ENCODE measurements at regions of chr6 and their contacts with region 1.

Region 1: GRCh38 chr6:53294095-53294494 is 54.7 kb downstream of the ELOVL5 start:
- DNase-seq: peak in 1 of 2 experiments; percentile 64
- H3K4me3 ChIP-seq: no peak overlapping the region
- H3K27ac ChIP-seq: no peak overlapping the region
- H3K4me1 ChIP-seq: no peaks in the 10 kb centered on the region
- H3K27me3 ChIP-seq: no peaks in the 10 kb centered on the region
- CTCF ChIP-seq: peak; percentile 71 to 85 (median 82)
- EP300 ChIP-seq: no peak
- POLR2A ChIP-seq: no peak
- RAD21 ChIP-seq: peak; percentile 69 to 76

Region 2: DNA sequence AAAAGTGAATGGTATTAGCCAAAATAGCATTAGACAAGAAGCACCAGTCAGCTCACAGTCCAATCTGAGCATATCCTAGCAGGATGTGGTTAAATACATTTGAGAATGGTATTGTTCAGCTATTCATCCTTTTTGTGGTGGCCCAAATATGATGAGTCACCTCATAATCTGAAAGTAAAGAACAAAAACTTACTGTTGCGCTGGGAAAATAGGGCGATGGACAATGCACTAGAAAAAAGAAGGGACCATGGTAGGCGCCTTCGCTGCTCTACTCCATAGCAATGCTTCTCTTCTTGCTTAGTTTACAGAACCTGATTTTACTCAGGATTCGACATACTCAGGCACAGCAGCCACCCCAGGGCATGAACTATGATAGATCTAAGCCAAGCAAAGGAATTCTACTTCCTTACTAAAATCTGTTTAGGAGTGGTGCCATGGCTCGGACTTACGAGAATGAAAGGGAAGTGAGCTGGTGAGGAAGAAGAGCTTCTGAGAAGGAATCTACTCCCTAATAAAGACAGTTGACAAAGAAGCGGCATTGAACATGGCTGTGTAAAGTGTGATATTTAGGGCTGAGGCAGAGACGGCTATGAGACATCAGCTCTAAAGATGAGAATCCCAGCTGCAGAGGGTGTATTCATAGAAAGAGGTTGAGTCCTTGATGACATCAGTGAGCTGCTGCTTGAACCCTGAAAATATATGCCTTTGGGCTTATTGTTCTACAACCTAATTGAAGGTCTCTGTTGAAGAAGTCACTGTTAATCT is 245.5 kb before region 1 on chr6:
- CTCF ChIA-PET with region 1: no interaction called
- POLR2A ChIA-PET with region 1: no interaction called
- DNase-seq: no peak
- H3K4me3 ChIP-seq: no peak overlapping the region
- H3K27ac ChIP-seq: no peak overlapping the region
- H3K4me1 ChIP-seq: peaks cover 0 to 9% (median 5%) of the 10 kb centered on the region in 4 experiments; a peak in 3 of 7 replicates
- H3K27me3 ChIP-seq: no peaks in the 10 kb centered on the region
- CTCF ChIP-seq: no peak
- EP300 ChIP-seq: no peak
- POLR2A ChIP-seq: no peak
- RAD21 ChIP-seq: no peak

Region 3: DNA sequence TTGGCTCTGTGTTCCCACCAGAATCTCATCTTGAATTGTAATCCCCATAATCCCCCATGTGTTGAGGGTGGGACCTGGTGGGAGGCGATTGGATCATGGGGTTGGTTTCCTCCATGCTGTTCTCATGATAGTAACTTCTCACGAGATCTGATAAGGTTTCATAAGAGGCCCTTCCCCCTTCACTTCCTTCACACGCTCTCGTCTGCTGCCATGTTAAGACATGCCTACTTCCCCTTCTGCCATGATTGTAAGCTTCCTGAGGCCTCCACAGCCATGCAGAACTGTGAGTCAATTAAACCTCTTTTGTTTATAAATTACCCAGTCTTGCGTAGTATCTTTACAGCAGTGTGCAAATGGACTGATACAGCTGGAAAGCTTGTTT is 35.3 kb before region 1 on chr6:
- CTCF ChIA-PET with region 1: interaction called, 12 read pairs
- POLR2A ChIA-PET with region 1: no interaction called
- DNase-seq: no peak
- H3K4me3 ChIP-seq: no peak overlapping the region
- H3K27ac ChIP-seq: no peak overlapping the region
- H3K4me1 ChIP-seq: no peaks in the 10 kb centered on the region
- H3K27me3 ChIP-seq: no peaks in the 10 kb centered on the region
- CTCF ChIP-seq: no peak
- EP300 ChIP-seq: no peak
- POLR2A ChIP-seq: no peak
- RAD21 ChIP-seq: no peak

Region 4: GRCh38 chr6:53273370-53273769 is 20.7 kb before region 1 on chr6:
- CTCF ChIA-PET with region 1: interaction called, 17 read pairs
- POLR2A ChIA-PET with region 1: no interaction called
- DNase-seq: no peak
- H3K4me3 ChIP-seq: no peak overlapping the region
- H3K27ac ChIP-seq: no peak overlapping the region
- H3K4me1 ChIP-seq: no peaks in the 10 kb centered on the region
- H3K27me3 ChIP-seq: no peaks in the 10 kb centered on the region
- CTCF ChIP-seq: peak; percentile 23 to 40 (median 26); a peak in 3 of 4 replicates
- EP300 ChIP-seq: no peak
- POLR2A ChIP-seq: no peak
- RAD21 ChIP-seq: peak; percentile 25 to 43; a peak in 3 of 4 replicates

Region 5: GRCh38 chr6:53342217-53342616 is 48.1 kb after region 1 on chr6:
- CTCF ChIA-PET with region 1: interaction called, 15 read pairs
- POLR2A ChIA-PET with region 1: no interaction called
- DNase-seq: no peak
- H3K4me3 ChIP-seq: no peak overlapping the region
- H3K27ac ChIP-seq: no peak overlapping the region
- H3K4me1 ChIP-seq: peaks cover 0 to 10% (median 6%) of the 10 kb centered on the region in 4 experiments; a peak in 5 of 7 replicates
- H3K27me3 ChIP-seq: no peaks in the 10 kb centered on the region
- CTCF ChIP-seq: no peak
- EP300 ChIP-seq: no peak
- POLR2A ChIP-seq: no peak
- RAD21 ChIP-seq: no peak

Region 6: GRCh38 chr6:54515013-54515412 is 1220.9 kb after region 1 on chr6:
- CTCF ChIA-PET with region 1: no interaction called
- POLR2A ChIA-PET with region 1: no interaction called
- DNase-seq: no peak
- H3K4me3 ChIP-seq: no peak overlapping the region
- H3K27ac ChIP-seq: no peak overlapping the region
- H3K4me1 ChIP-seq: no peaks in the 10 kb centered on the region
- H3K27me3 ChIP-seq: no peaks in the 10 kb centered on the region
- CTCF ChIP-seq: no peak
- EP300 ChIP-seq: no peak
- POLR2A ChIP-seq: no peak
- RAD21 ChIP-seq: no peak